ENCODE measurements at regions of chr20 and their contacts with region 1.

Region 1: DNA sequence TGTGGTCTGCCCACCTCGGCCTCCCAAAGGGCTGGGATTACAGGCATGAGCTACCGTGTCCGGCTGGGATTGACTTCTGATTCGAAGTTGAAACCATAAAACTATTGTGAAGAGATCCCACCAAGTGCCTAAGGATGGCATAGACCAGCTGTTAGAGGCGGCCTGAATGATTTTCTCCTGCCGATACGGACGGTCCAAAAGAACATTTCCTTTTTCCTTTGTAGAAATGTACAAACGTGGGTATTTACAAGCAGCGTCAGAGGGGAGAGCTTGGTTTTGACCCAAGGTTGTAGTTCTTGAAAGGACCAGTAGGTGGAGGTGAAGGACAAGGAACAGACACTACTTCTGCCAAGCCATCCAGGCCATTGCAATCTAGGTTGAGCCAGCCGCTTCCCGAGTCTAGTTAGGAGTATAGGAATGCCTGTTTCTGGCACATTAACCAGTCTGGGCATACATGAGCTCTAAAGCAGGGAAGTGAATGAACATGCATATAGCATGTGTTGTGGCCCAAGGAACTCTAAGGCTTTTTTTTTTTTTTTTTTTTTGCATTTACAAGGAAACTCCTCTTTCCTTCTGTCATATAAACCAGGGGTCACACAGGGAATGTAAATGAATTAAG is 29.1 kb downstream of the MOCS3 start:
- DNase-seq: peak; percentile 69
- ATAC-seq: peak; percentile 70
- H3K4me3 Mint-ChIP-seq: no peak overlapping the region; the same call in 1 of the 2 replicates
- H3K27ac Mint-ChIP-seq: 0 out of 2 replicates have a peak overlapping the region, but pooled peaks have one; percentile 26
- H3K4me1 Mint-ChIP-seq: peaks cover 39% of the 10 kb centered on the region
- H3K27me3 Mint-ChIP-seq: no peaks in the 10 kb centered on the region; the same call in 1 of the 2 replicates
- CTCF ChIP-seq: peak; percentile 83

Region 2: GRCh38 chr20:50953196-50953595 is 34.5 kb before region 1 on chr20:
- CTCF ChIA-PET with region 1: no interaction called
- POLR2A ChIA-PET with region 1: no interaction called
- DNase-seq: no peak
- ATAC-seq: no peak
- H3K4me3 Mint-ChIP-seq: no peak overlapping the region
- H3K27ac Mint-ChIP-seq: no peak overlapping the region
- H3K4me1 Mint-ChIP-seq: peaks cover 16% of the 10 kb centered on the region
- H3K27me3 Mint-ChIP-seq: no peaks in the 10 kb centered on the region
- CTCF ChIP-seq: no peak

Region 3: DNA sequence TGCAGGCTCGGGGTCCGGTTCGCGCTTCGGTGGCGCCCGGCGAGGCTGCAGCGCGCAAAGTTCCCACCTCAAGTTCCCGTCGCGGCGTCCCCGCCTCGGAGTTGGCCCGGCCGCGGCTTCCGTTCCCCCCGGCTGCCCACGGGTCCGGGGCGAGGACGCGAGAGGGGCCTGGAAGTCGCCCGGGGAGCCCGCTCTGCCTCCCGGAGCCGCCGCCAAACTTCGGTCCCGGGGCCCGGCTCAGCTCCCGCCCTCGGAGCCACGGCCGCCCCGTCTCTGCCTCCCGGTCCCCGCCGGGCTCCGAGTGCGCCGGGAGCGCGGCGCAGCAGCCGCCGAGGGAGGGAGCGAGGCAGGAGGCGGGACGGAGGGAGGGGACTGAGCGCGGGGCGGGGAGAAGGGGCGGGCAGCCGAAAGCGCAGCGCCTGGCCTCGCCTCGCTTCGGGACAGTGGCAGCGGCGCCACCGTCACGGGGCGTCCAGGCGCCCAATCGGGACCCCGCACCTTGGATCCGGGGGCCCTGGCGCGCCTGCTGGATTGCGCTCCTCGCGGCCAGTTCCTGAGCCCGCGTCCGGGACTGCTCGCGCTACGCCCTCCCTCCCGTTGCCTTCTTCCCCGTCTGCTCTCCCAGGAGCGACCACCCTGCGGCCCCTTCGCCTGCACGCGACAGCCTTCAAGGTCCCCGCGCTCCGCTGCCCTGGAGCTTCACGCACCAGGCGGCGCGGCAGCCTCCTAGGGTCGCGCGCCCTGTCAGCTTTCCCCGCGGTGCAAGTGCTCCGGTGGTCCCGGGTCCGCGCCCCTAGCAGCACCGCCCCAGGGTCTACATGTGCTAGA is 35.3 kb after region 1 on chr20 and contains the start of gene KCNG1:
- CTCF ChIA-PET with region 1: interaction called, 28 read pairs
- POLR2A ChIA-PET with region 1: no interaction called
- DNase-seq: peak; percentile 79
- ATAC-seq: peak; percentile 82
- H3K4me3 Mint-ChIP-seq: peak within 1 kb of the TSS; percentile 72
- H3K27ac Mint-ChIP-seq: no peak within 1 kb of the TSS
- H3K4me1 Mint-ChIP-seq: peaks cover 36% of the 10 kb centered on the region
- H3K27me3 Mint-ChIP-seq: peaks cover 49% of the 10 kb centered on the region
- CTCF ChIP-seq: no peak
- total RNA-seq, gene KCNG1: 31.2 to 34.6 TPM (median 31.6 TPM) in 3 replicates

Region 4: GRCh38 chr20:51306503-51307358 is 319.0 kb after region 1 on chr20:
- CTCF ChIA-PET with region 1: interaction called, 246 read pairs
- POLR2A ChIA-PET with region 1: interaction called, 3 read pairs
- DNase-seq: peak; percentile 87
- ATAC-seq: peak; percentile 72
- H3K4me3 Mint-ChIP-seq: no peak overlapping the region
- H3K27ac Mint-ChIP-seq: 0 out of 2 replicates have a peak overlapping the region, but pooled peaks have one; percentile 80
- H3K4me1 Mint-ChIP-seq: peaks cover 61% of the 10 kb centered on the region
- H3K27me3 Mint-ChIP-seq: peaks cover 43% of the 10 kb centered on the region
- CTCF ChIP-seq: peak; percentile 88

Region 5: GRCh38 chr20:51326201-51326819 is 338.6 kb after region 1 on chr20:
- CTCF ChIA-PET with region 1: interaction called, 211 read pairs
- POLR2A ChIA-PET with region 1: interaction called, 4 read pairs
- DNase-seq: peak; percentile 76
- ATAC-seq: peak; percentile 91
- H3K4me3 Mint-ChIP-seq: no peak overlapping the region
- H3K27ac Mint-ChIP-seq: no peak overlapping the region
- H3K4me1 Mint-ChIP-seq: peaks cover 16% of the 10 kb centered on the region
- H3K27me3 Mint-ChIP-seq: peaks cover 3% of the 10 kb centered on the region; the same call in 1 of the 2 replicates
- CTCF ChIP-seq: peak; percentile 37; the same call in 1 of the 2 replicates

Region 6: DNA sequence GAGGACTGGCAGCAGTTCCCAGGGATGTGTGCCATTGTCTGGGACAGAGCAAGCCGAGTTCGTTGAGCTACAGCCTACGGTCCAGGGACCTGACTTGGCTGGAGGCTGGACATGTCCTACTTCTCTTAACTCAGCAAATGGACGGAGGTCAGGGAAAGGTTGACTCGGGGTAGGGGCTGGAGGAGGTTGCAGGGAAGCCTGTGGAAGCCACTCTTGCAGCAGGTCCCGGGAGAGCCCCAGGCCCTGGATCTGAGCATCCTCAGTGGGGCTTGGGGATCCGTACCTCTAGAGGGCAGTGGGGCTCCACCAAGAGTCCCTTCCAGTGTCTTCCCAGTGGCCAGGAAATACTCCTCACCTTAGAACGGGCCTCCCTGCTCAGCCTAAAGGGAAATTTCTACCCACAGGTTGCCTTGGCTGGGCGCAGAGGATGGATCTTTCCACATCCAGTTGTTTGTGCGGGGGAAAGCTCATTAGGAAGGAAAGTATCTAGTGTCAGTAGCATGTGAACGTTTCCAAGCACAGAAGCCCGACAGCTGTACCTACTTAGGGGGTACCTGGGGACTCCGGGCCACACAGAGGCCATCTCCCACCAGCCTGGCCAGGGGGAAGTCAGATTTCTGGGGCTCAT is 384.6 kb after region 1 on chr20:
- CTCF ChIA-PET with region 1: interaction called, 10 read pairs
- POLR2A ChIA-PET with region 1: no interaction called
- DNase-seq: peak; percentile 84
- ATAC-seq: peak; percentile 99
- H3K4me3 Mint-ChIP-seq: no peak overlapping the region
- H3K27ac Mint-ChIP-seq: 0 out of 2 replicates have a peak overlapping the region, but pooled peaks have one; percentile 36
- H3K4me1 Mint-ChIP-seq: peaks cover 10% of the 10 kb centered on the region
- H3K27me3 Mint-ChIP-seq: no peaks in the 10 kb centered on the region
- CTCF ChIP-seq: peak; percentile 44

Region 7: DNA sequence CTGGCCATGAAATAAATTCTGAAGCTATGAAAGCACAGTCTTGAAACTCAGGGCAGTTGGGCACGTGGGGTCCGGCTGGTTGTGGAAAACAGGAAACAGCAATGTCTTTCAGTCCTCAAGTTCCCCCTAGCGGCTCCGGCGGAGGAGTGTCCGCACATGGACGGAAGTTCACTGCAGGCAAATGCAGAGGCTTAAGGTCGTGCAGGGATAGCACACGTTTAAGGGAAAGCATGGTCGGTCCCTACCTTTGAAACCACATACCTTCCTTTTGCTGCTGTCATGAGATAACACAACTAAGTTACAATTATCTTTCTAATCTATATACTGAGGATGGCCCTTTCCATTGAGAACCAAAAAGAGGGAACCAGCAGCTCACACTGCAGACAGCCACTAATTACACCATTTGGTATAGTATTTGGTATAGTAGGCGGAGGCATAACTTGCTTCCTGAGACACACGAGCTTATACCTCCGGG is 607.4 kb after region 1 on chr20:
- CTCF ChIA-PET with region 1: interaction called, 14 read pairs
- POLR2A ChIA-PET with region 1: interaction called, 3 read pairs
- DNase-seq: peak; percentile 84
- ATAC-seq: peak; percentile 96
- H3K4me3 Mint-ChIP-seq: no peak overlapping the region
- H3K27ac Mint-ChIP-seq: no peak overlapping the region
- H3K4me1 Mint-ChIP-seq: peaks cover 44% of the 10 kb centered on the region
- H3K27me3 Mint-ChIP-seq: no peaks in the 10 kb centered on the region; the same call in 1 of the 2 replicates
- CTCF ChIP-seq: peak; percentile 61